Activated CD4-positive, alpha-beta T cell treated with anti-CD3 and anti-CD28 coated beads, Interleukin-2, amount 10 ng/mL, durations not matched to agents 24 days and 14 days (primary cell): ENCODE measurements at regions of chr9 and their contacts with region 1.

Region 1: GRCh38 chr9:121545875-121546423 is 46.3 kb upstream of the GGTA1 start:
- DNase-seq: peak; percentile 90
- H3K4me3 Mint-ChIP-seq: no peak overlapping the region
- H3K27ac Mint-ChIP-seq: no peak overlapping the region
- H3K4me1 Mint-ChIP-seq: no peaks in the 10 kb centered on the region
- H3K27me3 Mint-ChIP-seq: peaks cover 3% of the 10 kb centered on the region

Region 2: DNA sequence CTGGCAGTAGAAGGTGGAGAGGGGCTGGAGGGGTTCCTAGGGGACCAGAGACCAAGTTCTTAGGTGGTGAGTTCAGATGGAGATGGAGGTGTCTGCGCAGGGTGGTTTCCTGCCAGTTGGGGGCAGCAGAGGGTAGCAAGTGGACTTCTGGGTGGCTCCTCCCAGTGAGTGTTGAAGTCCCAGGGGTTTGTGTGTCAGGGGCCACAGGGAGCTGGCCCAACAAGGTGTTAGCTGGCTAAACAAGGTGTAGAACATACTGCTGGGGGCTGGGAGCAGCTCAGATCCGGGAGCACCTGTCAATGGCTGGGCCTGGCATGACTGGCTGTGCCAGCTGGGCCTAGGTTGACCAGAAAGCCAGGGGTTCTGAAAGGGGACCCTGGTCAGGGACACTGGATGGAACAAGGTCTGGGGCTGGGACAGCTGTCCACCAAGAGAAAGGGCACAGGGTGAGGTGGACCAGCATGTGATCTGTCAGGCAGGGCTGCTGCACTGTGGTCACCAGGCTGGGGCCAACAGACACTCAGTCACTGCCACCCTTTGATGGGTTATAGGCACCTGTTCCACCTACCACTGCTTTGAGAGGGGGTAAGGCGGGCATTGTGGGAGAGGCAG is 141.1 kb after region 1 on chr9:
- intact Hi-C with region 1: loop called (anchors 10 kb)
- DNase-seq: peak; percentile 91
- H3K4me3 Mint-ChIP-seq: no peak overlapping the region
- H3K27ac Mint-ChIP-seq: no peak overlapping the region
- H3K4me1 Mint-ChIP-seq: no peaks in the 10 kb centered on the region
- H3K27me3 Mint-ChIP-seq: peaks cover 4% of the 10 kb centered on the region

Region 3: GRCh38 chr9:121807823-121808278 is 261.9 kb after region 1 on chr9:
- intact Hi-C with region 1: no loop called
- DNase-seq: no peak
- H3K4me3 Mint-ChIP-seq: no peak overlapping the region
- H3K27ac Mint-ChIP-seq: no peak overlapping the region
- H3K4me1 Mint-ChIP-seq: no peaks in the 10 kb centered on the region
- H3K27me3 Mint-ChIP-seq: peaks cover 5% of the 10 kb centered on the region